Endothelial cell of umbilical vein (primary cell): ENCODE measurements at regions of chr7 and their contacts with region 1.

Region 1: DNA sequence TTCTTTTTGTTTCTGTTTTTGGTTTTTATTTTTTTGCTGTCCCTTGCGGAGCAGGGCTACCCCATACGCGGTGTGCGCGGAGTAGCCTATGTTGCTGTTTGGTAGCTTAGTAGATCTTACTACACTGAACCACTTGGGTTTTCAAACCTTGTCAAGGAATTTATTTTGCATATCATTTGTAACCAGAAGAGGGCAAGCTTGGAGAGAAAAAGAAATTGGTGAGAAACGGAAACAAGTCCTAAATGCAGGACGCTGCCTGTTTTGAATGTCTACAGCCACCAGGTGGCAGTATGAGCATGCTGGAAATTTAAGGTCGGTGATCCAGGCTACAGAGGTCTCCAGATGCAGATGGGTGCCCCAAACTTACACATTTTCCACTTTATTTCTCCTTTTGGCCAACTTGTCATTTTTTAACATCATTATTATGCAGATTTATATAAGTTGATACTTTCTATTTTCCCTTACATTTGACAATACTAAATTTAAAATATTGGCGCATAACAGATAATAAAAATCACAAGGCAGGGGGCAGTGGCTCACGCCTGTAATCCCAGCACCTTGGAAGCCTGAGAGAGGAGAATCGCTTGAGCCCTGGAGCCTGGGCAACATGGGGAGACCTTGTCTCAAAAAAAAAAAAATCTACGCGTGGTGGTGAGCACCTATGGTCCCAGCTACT is 15.3 kb upstream of the TRA2A start:
- DNase-seq: peak; percentile 91
- H3K4me3 ChIP-seq: no peak overlapping the region
- H3K27ac ChIP-seq: no peak overlapping the region
- H3K4me1 ChIP-seq: no peaks in the 10 kb centered on the region
- H3K27me3 ChIP-seq: peaks cover 0 to 2% of the 10 kb centered on the region in 2 experiments
- CTCF ChIP-seq: peak; percentile 82 to 97
- POLR2A ChIP-seq: no peak

Region 2: GRCh38 chr7:23261843-23262452 is 285.1 kb before region 1 on chr7:
- CTCF ChIA-PET with region 1: interaction called, 10 read pairs
- POLR2A ChIA-PET with region 1: no interaction called
- dilution Hi-C with region 1: no loop called
- intact Hi-C with region 1: loop called (anchors 1 kb)
- DNase-seq: peak; percentile 69
- H3K4me3 ChIP-seq: no peak overlapping the region
- H3K27ac ChIP-seq: no peak overlapping the region
- H3K4me1 ChIP-seq: no peaks in the 10 kb centered on the region
- H3K27me3 ChIP-seq: peaks cover 5 to 14% of the 10 kb centered on the region in 2 experiments
- CTCF ChIP-seq: peak; percentile 87 to 93
- POLR2A ChIP-seq: no peak

Region 3: GRCh38 chr7:23431702-23432199 is 115.3 kb before region 1 on chr7:
- CTCF ChIA-PET with region 1: no interaction called
- POLR2A ChIA-PET with region 1: no interaction called
- dilution Hi-C with region 1: no loop called
- intact Hi-C with region 1: loop called (anchors 2 kb)
- DNase-seq: no peak
- H3K4me3 ChIP-seq: no peak overlapping the region
- H3K27ac ChIP-seq: peak overlapping the region; percentile 49
- H3K4me1 ChIP-seq: peaks cover 22% of the 10 kb centered on the region
- H3K27me3 ChIP-seq: no peaks in the 10 kb centered on the region
- CTCF ChIP-seq: no peak
- POLR2A ChIP-seq: no peak

Region 4: GRCh38 chr7:23654508-23654907 is 107.5 kb after region 1 on chr7:
- CTCF ChIA-PET with region 1: no interaction called
- POLR2A ChIA-PET with region 1: no interaction called
- dilution Hi-C with region 1: no loop called
- intact Hi-C with region 1: loop called (anchors 1 kb)
- DNase-seq: peak; percentile 35
- H3K4me3 ChIP-seq: no peak overlapping the region
- H3K27ac ChIP-seq: no peak overlapping the region
- H3K4me1 ChIP-seq: no peaks in the 10 kb centered on the region
- H3K27me3 ChIP-seq: no peaks in the 10 kb centered on the region
- CTCF ChIP-seq: peak; percentile 47 to 50
- POLR2A ChIP-seq: no peak

Region 5: GRCh38 chr7:23712368-23713284 is 165.6 kb after region 1 on chr7:
- CTCF ChIA-PET with region 1: interaction called, 96 read pairs
- POLR2A ChIA-PET with region 1: no interaction called
- dilution Hi-C with region 1: no loop called
- intact Hi-C with region 1: loop called (anchors 1 kb)
- DNase-seq: peak; percentile 58
- H3K4me3 ChIP-seq: no peak overlapping the region
- H3K27ac ChIP-seq: no peak overlapping the region
- H3K4me1 ChIP-seq: no peaks in the 10 kb centered on the region
- H3K27me3 ChIP-seq: no peaks in the 10 kb centered on the region
- CTCF ChIP-seq: peak; percentile 20 to 40
- POLR2A ChIP-seq: no peak

Region 6: GRCh38 chr7:23852135-23852534 is 305.1 kb after region 1 on chr7:
- CTCF ChIA-PET with region 1: no interaction called
- POLR2A ChIA-PET with region 1: no interaction called
- dilution Hi-C with region 1: no loop called
- intact Hi-C with region 1: no loop called
- DNase-seq: no peak
- H3K4me3 ChIP-seq: no peak overlapping the region
- H3K27ac ChIP-seq: no peak overlapping the region
- H3K4me1 ChIP-seq: no peaks in the 10 kb centered on the region
- H3K27me3 ChIP-seq: no peaks in the 10 kb centered on the region
- CTCF ChIP-seq: no peak
- POLR2A ChIP-seq: no peak

Region 7: DNA sequence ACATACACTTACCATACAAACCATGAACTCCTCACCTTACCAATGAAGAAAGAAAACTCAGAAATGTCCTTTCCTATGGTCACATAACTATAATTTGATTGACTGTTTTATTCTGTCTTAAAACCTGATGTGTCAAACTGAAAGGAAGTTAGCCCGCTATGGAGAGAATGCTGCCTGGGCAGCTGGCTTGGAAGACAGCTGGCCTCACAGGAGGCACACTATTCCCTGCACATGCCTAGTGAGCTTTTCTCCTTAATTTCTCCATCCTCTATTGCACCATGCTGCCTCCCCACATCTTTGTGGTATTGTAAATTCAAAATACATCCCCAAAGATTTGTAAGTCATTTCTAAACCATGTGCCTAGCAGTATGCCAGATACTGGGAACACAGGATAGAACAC is 326.3 kb after region 1 on chr7:
- CTCF ChIA-PET with region 1: no interaction called
- POLR2A ChIA-PET with region 1: no interaction called
- dilution Hi-C with region 1: no loop called
- intact Hi-C with region 1: no loop called
- DNase-seq: no peak
- H3K4me3 ChIP-seq: no peak overlapping the region
- H3K27ac ChIP-seq: no peak overlapping the region
- H3K4me1 ChIP-seq: no peaks in the 10 kb centered on the region
- H3K27me3 ChIP-seq: no peaks in the 10 kb centered on the region
- CTCF ChIP-seq: no peak
- POLR2A ChIP-seq: no peak

Region 8: DNA sequence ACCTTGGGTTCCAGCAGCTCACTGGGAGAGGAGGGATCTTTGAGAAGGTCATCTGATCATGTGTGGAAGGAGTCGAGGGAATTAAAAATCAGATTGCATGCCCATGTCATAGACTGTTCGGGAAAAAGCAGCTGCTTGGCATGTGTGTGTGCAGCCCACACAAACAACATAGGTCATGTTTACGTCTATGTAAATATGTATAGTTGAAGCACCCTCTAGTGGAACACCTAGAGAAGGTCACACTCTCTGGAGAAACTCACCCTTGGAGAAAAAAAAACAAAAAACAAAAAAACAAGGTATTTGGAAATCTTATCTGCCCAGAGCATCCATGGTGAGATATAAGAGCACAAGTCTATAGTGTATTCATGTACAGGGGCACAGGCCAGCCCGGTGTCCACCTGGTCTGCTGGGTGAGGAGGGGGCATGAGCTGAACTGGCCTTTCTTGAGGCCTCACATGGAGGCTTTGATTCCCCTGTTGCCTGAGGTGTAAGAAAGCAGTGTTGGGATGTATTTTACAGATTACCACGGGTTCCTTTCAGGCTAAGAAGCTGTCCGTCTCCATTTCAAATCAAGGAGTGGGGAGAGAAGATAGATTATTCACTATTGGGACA is 835.0 kb after region 1 on chr7:
- CTCF ChIA-PET with region 1: no interaction called
- POLR2A ChIA-PET with region 1: no interaction called
- dilution Hi-C with region 1: no loop called
- intact Hi-C with region 1: loop called (anchors 5 kb)
- DNase-seq: no peak
- H3K4me3 ChIP-seq: no peak overlapping the region
- H3K27ac ChIP-seq: no peak overlapping the region
- H3K4me1 ChIP-seq: no peaks in the 10 kb centered on the region
- H3K27me3 ChIP-seq: no peaks in the 10 kb centered on the region
- CTCF ChIP-seq: peak; percentile 13 to 16
- POLR2A ChIP-seq: no peak